Mammary epithelial cell (primary cell): ENCODE measurements at regions of chr2 and their contacts with region 1.

Region 1: GRCh38 chr2:41954304-41955291 is 93.2 kb upstream of the PKDCC start:
- DNase-seq: no peak
- H3K4me3 ChIP-seq: no peak overlapping the region
- H3K27ac ChIP-seq: no peak overlapping the region
- H3K4me1 ChIP-seq: peaks cover 5% of the 10 kb centered on the region
- H3K27me3 ChIP-seq: no peaks in the 10 kb centered on the region
- CTCF ChIP-seq: no peak

Region 2: GRCh38 chr2:41994207-41994606 is 39.6 kb after region 1 on chr2:
- CTCF ChIA-PET with region 1: no interaction called
- dilution Hi-C with region 1: loop called (anchors 5 kb)
- in situ Hi-C with region 1: no loop called
- intact Hi-C with region 1: no loop called
- DNase-seq: no peak
- H3K4me3 ChIP-seq: no peak overlapping the region
- H3K27ac ChIP-seq: no peak overlapping the region
- H3K4me1 ChIP-seq: no peaks in the 10 kb centered on the region
- H3K27me3 ChIP-seq: peaks cover 2% of the 10 kb centered on the region
- CTCF ChIP-seq: no peak